Colonic mucosa (tissue), 4 donors: ENCODE measurements at regions of chr5 and their contacts with region 1.

Region 1: DNA sequence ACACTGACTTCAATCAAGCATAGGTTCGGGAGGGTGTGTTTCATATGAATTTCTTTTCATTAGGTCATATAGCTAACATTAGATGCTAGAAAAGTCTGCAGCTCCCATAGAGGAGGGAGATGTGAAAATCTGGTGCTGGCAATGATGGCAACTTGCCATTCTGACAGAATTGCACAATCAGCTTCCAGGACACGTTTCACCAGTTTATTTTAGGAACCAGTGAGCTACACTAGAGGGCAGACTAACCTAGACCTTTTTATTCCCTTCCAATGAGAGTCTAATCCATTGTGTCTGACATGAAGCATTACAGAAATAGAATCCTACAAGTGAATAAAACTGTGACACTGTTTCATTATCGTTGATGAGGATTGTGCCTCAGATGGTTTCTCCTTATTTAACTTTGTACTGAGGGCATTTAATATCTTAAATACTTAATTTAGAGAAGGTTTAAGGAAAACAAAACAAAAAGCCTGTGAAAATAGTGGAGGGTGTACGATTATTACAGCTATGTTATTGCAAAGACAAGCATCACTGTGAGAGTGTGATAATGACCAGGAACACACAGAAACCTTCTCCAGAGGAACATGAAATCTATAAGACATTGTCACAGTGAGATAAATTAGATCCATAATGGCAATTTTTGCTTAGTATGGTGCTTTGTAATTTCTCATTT is 363.3 kb upstream of the RPS23 start:
- DNase-seq: peak; percentile 84
- H3K4me3 ChIP-seq: no peak overlapping the region
- H3K27ac ChIP-seq: no peak overlapping the region
- H3K4me1 ChIP-seq: peaks cover 4% of the 10 kb centered on the region
- H3K27me3 ChIP-seq: no peaks in the 10 kb centered on the region
- CTCF ChIP-seq: peak; percentile 60

Region 2: GRCh38 chr5:82793808-82794419 is 152.4 kb after region 1 on chr5:
- intact Hi-C with region 1: loop called (anchors 5 kb)
- DNase-seq: peak; percentile 51
- H3K4me3 ChIP-seq: no peak overlapping the region
- H3K27ac ChIP-seq: no peak overlapping the region
- H3K4me1 ChIP-seq: no peaks in the 10 kb centered on the region
- H3K27me3 ChIP-seq: no peaks in the 10 kb centered on the region
- CTCF ChIP-seq: peak; percentile 68